ENCODE measurements at regions of chr5 and their contacts with region 1.

Region 1: GRCh38 chr5:35876921-35877320 is 20.2 kb downstream of the IL7R start:
- DNase-seq: no peak
- ATAC-seq: no peak
- H3K4me3 ChIP-seq: no peak overlapping the region
- H3K4me3 Mint-ChIP-seq: peak overlapping the region in 8 of 10 donors; percentile 5 to 73 (median 47)
- H3K27ac ChIP-seq: peak overlapping the region; percentile 27
- H3K27ac Mint-ChIP-seq: peak overlapping the region; percentile 24 to 87 (median 72)
- H3K4me1 ChIP-seq: peaks cover 25 to 62% of the 10 kb centered on the region in 2 donors
- H3K4me1 Mint-ChIP-seq: peaks cover 51 to 99% (median 94%) of the 10 kb centered on the region in 7 donors
- H3K27me3 ChIP-seq: no peaks in the 10 kb centered on the region
- H3K27me3 Mint-ChIP-seq: no peaks in the 10 kb centered on the region

Region 2: GRCh38 chr5:35863159-35863558 is 13.8 kb before region 1 on chr5:
- CTCF ChIA-PET with region 1: interaction called, 3 read pairs
- POLR2A ChIA-PET with region 1: interaction called, 357 read pairs
- intact Hi-C with region 1: no loop called
- DNase-seq: no peak
- ATAC-seq: no peak
- H3K4me3 ChIP-seq: peak overlapping the region; percentile 80
- H3K4me3 Mint-ChIP-seq: peak overlapping the region; percentile 87 to 99 (median 94)
- H3K27ac ChIP-seq: peak overlapping the region; percentile 98
- H3K27ac Mint-ChIP-seq: peak overlapping the region; percentile 47 to 99 (median 95)
- H3K4me1 ChIP-seq: peaks cover 34 to 45% of the 10 kb centered on the region in 2 donors
- H3K4me1 Mint-ChIP-seq: peaks cover 20 to 81% (median 76%) of the 10 kb centered on the region in 7 donors
- H3K27me3 ChIP-seq: no peaks in the 10 kb centered on the region
- H3K27me3 Mint-ChIP-seq: no peaks in the 10 kb centered on the region

Region 3: GRCh38 chr5:35890021-35890696 is 13.2 kb after region 1 on chr5:
- CTCF ChIA-PET with region 1: interaction called, 3 read pairs
- POLR2A ChIA-PET with region 1: interaction called, 17 read pairs
- intact Hi-C with region 1: loop called in 1 of 2 experiments (anchors 1 kb)
- DNase-seq: no peak
- ATAC-seq: no peak
- H3K4me3 ChIP-seq: no peak overlapping the region
- H3K4me3 Mint-ChIP-seq: no peak overlapping the region
- H3K27ac ChIP-seq: no peak overlapping the region
- H3K27ac Mint-ChIP-seq: no peak overlapping the region
- H3K4me1 ChIP-seq: no peaks in the 10 kb centered on the region
- H3K4me1 Mint-ChIP-seq: peaks cover 0 to 7% (median 0%) of the 10 kb centered on the region in 7 donors
- H3K27me3 ChIP-seq: no peaks in the 10 kb centered on the region
- H3K27me3 Mint-ChIP-seq: no peaks in the 10 kb centered on the region

Region 4: DNA sequence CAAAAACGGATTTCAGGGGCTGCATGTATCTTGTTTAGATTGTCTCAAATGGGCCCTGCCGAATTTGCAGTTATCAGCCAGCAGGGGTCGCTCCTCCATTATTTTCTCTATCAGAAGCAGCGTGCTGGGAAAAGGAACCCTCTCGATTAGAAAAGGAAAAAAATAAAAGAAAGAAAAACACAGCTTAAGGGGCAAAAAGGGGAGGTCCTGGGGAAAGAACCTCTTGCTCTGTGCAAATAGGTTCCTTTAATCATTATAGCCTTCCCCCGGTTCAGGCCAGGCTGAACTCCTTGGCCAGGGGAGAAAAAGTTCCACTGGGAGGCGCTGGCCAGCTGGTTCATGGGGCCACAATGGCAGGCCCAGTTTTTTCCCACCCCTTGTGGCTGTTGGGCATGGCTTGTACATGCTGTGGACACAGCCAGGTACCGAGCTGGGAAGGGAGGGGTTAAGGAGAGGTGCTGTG is 86.5 kb after region 1 on chr5:
- CTCF ChIA-PET with region 1: no interaction called
- POLR2A ChIA-PET with region 1: no interaction called
- intact Hi-C with region 1: no loop called
- DNase-seq: no peak
- ATAC-seq: no peak
- H3K4me3 ChIP-seq: no peak overlapping the region
- H3K4me3 Mint-ChIP-seq: no peak overlapping the region
- H3K27ac ChIP-seq: no peak overlapping the region
- H3K27ac Mint-ChIP-seq: no peak overlapping the region
- H3K4me1 ChIP-seq: no peaks in the 10 kb centered on the region
- H3K4me1 Mint-ChIP-seq: no peaks in the 10 kb centered on the region
- H3K27me3 ChIP-seq: no peaks in the 10 kb centered on the region
- H3K27me3 Mint-ChIP-seq: peaks cover 16 to 47% (median 25%) of the 10 kb centered on the region in 5 donors

Region 5: DNA sequence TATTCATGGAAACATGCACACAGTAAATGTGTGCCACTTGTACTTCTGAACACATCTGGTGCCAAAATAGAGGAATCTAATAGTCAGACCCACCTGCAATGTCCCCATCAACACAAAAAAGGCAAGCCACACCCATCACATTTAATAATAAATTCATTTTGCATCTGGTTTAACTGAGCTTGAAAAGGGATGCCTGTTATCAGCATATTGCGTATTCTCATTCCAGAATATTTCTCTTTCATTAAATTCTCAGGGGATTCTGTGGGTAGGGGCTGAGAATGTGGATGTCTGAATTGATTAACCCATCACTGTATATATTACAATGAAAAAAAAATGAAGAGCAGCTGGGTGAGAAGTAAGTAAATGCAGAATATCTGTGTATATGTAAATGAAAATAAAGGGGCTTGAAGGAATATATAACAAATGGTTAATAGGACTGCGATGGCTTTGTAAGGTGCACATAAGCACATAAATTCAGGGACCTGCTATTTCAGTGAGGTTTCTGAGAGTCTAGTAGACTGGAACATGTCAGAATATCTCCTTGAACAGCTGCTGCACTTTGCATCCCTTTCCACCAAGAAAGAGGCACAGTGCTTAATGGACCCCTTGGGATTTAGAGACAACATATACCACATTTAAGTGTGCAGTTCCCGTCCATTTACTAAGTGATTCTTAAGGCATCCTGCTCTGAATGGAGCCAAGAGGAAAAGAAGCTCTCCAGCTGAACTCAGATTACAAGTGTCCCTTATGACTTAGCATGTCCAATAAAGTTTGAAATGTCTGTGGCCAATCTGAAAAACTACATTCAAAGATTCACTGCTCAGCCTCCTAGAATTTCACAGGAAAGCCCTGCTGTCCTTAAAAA is 895.6 kb after region 1 on chr5:
- CTCF ChIA-PET with region 1: no interaction called
- POLR2A ChIA-PET with region 1: no interaction called
- intact Hi-C with region 1: no loop called
- DNase-seq: no peak
- ATAC-seq: no peak
- H3K4me3 ChIP-seq: no peak overlapping the region
- H3K4me3 Mint-ChIP-seq: no peak overlapping the region
- H3K27ac ChIP-seq: no peak overlapping the region
- H3K27ac Mint-ChIP-seq: no peak overlapping the region
- H3K4me1 ChIP-seq: no peaks in the 10 kb centered on the region
- H3K4me1 Mint-ChIP-seq: peaks cover 0 to 2% (median 0%) of the 10 kb centered on the region in 7 donors
- H3K27me3 ChIP-seq: no peaks in the 10 kb centered on the region
- H3K27me3 Mint-ChIP-seq: peaks cover 0 to 18% (median 3%) of the 10 kb centered on the region in 5 donors